Activated naive CD4-positive, alpha-beta T cell treated with anti-CD3 and anti-CD28 coated beads, Interleukin-2, amount 10 ng/mL, durations not matched to agents 7 days and 5 days (primary cell): ENCODE measurements at regions of chr10 and their contacts with region 1.

Region 1: DNA sequence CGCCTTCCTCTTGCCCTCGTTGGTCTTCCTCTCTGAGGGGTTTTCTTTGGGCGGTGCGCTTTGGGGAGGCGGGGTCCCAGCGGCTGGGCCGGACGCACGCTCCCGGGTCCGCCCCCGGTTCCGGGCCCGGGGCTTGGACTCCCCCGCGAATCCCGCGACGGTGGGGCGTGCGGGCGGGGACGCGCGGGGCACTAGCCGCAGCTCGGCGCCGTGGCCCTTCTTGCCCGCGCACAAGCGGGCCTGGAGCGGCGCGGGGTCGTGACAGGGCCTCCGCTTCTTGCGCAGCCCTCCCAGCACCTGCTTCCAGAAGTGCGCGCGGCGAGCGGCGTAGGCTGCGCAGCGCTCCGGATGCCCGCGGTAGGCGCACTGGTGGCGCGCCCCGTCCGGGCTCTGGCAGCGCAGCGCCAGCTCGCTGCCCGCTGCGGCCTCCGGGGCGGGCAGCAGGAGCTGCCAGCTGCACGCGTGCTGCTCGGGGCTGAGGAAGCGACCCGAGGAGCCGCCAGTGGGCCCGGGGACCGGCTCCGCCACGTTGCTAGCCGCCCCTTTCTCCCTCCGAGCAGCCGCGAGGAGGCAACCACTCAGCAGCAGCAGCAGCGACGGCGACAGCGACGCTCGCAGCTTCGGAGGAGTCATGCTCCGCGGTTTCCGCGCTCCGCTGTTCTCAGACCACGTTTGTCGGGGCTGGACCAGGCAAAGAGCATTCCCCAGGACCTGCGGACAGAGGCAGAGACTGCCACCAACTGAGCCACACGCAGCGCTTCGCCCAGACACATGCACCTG is 759 bp downstream of the FGFBP3 start:
- DNase-seq: peak; percentile 76
- H3K4me3 Mint-ChIP-seq: peak overlapping the region; percentile 85
- H3K27ac Mint-ChIP-seq: peak overlapping the region; percentile 84
- H3K4me1 Mint-ChIP-seq: peaks cover 22% of the 10 kb centered on the region
- H3K27me3 Mint-ChIP-seq: peaks cover 6% of the 10 kb centered on the region

Region 2: GRCh38 chr10:91758303-91759146 is 150.0 kb before region 1 on chr10:
- CTCF ChIA-PET with region 1: interaction called, 28 read pairs
- DNase-seq: no peak
- H3K4me3 Mint-ChIP-seq: no peak overlapping the region
- H3K27ac Mint-ChIP-seq: no peak overlapping the region
- H3K4me1 Mint-ChIP-seq: peaks cover 6% of the 10 kb centered on the region
- H3K27me3 Mint-ChIP-seq: peaks cover 31% of the 10 kb centered on the region

Region 3: DNA sequence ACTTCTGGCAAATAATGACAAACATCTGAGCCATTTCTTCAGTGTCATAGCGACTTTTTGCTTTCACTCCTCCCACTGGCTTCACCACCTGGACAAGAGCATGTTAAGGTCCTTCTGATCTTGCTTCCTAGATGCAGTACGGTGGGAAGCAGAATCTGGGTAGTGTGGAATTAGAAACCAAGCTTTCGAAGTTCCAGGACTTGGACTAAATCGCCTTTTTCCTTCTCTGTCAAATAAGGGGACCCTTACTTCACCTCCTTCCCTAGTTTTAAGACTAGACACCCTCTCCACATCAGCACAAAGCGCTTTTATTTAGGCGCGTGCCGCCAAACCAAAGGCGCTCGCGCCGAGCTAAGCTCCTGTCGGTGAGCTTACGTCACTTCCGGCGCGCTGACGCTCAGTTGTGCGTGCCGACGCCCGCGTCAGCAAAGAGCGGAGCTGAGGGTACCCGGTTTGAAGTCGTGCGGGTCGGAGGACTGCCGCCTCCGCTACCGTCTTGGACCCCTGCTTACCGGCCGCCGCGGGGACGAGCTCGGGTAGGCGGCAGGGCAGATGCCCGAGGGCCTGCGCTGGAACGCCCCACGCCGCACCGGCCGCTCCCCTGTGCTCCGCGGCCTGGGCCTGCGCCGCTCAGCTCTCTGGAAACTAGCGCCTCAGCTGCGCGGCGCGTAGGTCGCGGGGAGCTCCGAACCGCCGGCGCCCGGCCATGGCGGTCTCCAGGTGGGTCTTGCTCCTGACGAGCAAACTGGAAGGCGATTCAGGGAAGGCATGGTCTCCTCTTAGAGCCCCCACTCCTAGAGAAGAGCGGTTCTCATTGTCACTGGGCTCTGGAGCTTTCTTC is 15.1 kb after region 1 on chr10 and contains the start of gene BTAF1:
- CTCF ChIA-PET with region 1: interaction called, 10 read pairs
- DNase-seq: peak; percentile 95
- H3K4me3 Mint-ChIP-seq: peak within 1 kb of the TSS; percentile 88
- H3K27ac Mint-ChIP-seq: peak within 1 kb of the TSS; percentile 98
- H3K4me1 Mint-ChIP-seq: peaks cover 43% of the 10 kb centered on the region
- H3K27me3 Mint-ChIP-seq: peaks cover 8% of the 10 kb centered on the region